ENCODE measurements at regions of chr21 and their contacts with region 1.

Region 1: DNA sequence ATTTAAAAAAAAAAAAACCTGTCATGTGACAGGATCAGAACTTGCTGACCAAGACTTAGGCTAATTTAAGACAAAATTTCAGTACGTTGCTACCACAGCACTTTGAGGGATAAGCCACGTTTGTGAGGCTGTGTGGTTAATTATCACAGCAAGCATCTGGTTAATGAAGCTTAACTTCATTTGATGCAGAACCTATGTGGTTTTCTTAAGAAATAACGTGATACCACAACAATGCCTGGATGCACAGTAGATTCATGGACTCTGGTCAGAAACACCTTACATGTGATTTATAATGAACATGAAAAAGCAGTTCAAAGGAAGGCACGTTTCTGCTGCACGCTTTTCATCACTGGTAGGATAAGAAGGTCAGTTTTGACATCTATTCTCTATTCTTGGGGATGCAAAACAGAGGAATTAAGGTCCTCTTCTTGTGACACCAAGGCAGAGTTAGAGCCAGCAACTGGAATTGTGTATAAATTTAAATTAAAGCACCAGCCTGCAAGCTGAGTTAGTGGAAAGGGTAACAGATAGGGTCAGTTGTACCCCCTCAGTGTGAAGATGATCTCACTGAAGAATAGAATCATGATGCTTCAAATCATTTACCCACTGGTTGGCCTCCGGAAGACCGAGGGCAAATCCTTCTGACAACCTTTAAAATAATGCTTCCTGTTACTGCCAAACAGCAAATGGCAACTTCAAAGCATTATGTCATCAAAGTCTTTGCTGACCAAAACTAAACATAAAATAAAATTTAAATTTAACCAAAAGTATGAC is 6.0 kb upstream of the KRTAP8-1 start:
- DNase-seq: no peak
- ATAC-seq: no peak

Region 2: GRCh38 chr21:30758306-30758705 is 60.7 kb before region 1 on chr21:
- intact Hi-C with region 1: loop called in 1 of 2 experiments (anchors 10 kb)
- DNase-seq: no peak
- ATAC-seq: no peak

Region 3: GRCh38 chr21:30900881-30901280 is 81.9 kb after region 1 on chr21:
- intact Hi-C with region 1: no loop called
- DNase-seq: no peak
- ATAC-seq: no peak

Region 4: GRCh38 chr21:31011412-31011811 is 192.4 kb after region 1 on chr21:
- intact Hi-C with region 1: no loop called
- DNase-seq: no peak
- ATAC-seq: no peak

Measured in left colon (tissue), 2 donors.